ENCODE measurements at regions of chr4 and their contacts with region 1.

Region 1: GRCh38 chr4:156419080-156419685 is 465.5 kb upstream of the CTSO start:
- DNase-seq: no peak
- ATAC-seq: no peak
- H3K4me3 ChIP-seq: no peak overlapping the region
- H3K27ac ChIP-seq: no peak overlapping the region
- H3K4me1 ChIP-seq: no peaks in the 10 kb centered on the region
- H3K27me3 ChIP-seq: no peaks in the 10 kb centered on the region
- CTCF ChIP-seq: no peak
- EP300 ChIP-seq: no peak
- POLR2A ChIP-seq: no peak
- RAD21 ChIP-seq: no peak

Region 2: GRCh38 chr4:155060419-155060818 is 1358.8 kb before region 1 on chr4:
- CTCF ChIA-PET with region 1: no interaction called
- POLR2A ChIA-PET with region 1: no interaction called
- in situ Hi-C with region 1: no loop called
- intact Hi-C with region 1: no loop called
- DNase-seq: no peak
- ATAC-seq: no peak
- H3K4me3 ChIP-seq: no peak overlapping the region
- H3K27ac ChIP-seq: no peak overlapping the region
- H3K4me1 ChIP-seq: no peaks in the 10 kb centered on the region
- H3K27me3 ChIP-seq: no peaks in the 10 kb centered on the region
- CTCF ChIP-seq: no peak
- EP300 ChIP-seq: no peak
- POLR2A ChIP-seq: no peak
- RAD21 ChIP-seq: no peak

Region 3: DNA sequence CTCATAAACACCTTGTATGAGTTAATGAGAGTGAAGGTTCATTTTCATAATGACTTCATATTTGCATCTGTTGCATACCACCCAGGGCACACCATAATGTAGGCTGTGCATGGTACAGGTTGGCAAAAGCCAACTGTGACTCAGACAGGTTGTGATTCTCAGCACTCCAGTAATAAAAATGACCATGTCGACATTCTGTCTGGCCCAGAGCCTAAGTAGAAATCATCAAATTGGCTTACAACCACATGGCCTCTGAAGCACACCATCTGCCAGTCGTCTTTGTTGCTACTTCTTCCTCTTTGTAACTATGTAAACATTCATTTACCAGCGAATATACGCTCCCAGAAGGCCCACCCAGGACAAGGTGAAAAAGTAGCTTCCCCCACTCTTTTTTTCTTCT is 1294.2 kb after region 1 on chr4:
- CTCF ChIA-PET with region 1: no interaction called
- POLR2A ChIA-PET with region 1: no interaction called
- in situ Hi-C with region 1: no loop called
- intact Hi-C with region 1: loop called (anchors 5 kb)
- DNase-seq: no peak
- ATAC-seq: no peak
- H3K4me3 ChIP-seq: no peak overlapping the region
- H3K27ac ChIP-seq: no peak overlapping the region
- H3K4me1 ChIP-seq: no peaks in the 10 kb centered on the region
- H3K27me3 ChIP-seq: no peaks in the 10 kb centered on the region
- CTCF ChIP-seq: no peak
- EP300 ChIP-seq: no peak
- POLR2A ChIP-seq: no peak
- RAD21 ChIP-seq: no peak

Measured in K562 (cell line).